ENCODE measurements at regions of chr1 and their contacts with region 1.

Region 1: GRCh38 chr1:39189592-39190041 is 14.9 kb upstream of the MACF1 start:
- DNase-seq: no peak
- ATAC-seq: no peak
- H3K4me3 ChIP-seq: no peak overlapping the region
- H3K4me3 Mint-ChIP-seq: peak overlapping the region in 1 of 10 donors; percentile 37
- H3K27ac ChIP-seq: no peak overlapping the region
- H3K27ac Mint-ChIP-seq: peak overlapping the region in 7 of 9 donors; percentile 30 to 97 (median 73)
- H3K4me1 ChIP-seq: peaks cover 22 to 28% of the 10 kb centered on the region in 2 donors
- H3K4me1 Mint-ChIP-seq: peaks cover 30 to 83% (median 55%) of the 10 kb centered on the region in 7 donors
- H3K27me3 ChIP-seq: no peaks in the 10 kb centered on the region
- H3K27me3 Mint-ChIP-seq: no peaks in the 10 kb centered on the region

Region 2: DNA sequence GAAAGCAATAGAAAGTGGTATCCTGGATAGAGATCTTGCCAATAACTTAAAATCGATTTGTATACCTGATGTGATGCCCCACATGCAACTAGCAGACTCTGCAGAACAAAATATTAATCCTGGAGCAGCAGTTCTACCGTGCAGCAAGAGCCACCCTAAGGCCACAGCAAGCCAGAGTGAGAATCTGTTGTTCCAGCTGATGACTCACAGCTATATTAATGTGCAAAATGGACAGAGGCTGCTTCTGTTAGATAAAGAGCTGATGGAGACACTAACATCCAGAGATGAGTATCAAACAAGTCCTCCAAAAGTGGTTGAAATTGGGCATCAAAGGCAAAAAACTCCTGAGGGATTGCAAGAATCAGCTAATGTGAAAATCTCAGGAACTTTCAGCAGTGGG is 142.7 kb after region 1 on chr1:
- CTCF ChIA-PET with region 1: no interaction called
- POLR2A ChIA-PET with region 1: no interaction called
- intact Hi-C with region 1: loop called in 1 of 2 experiments (anchors 5 kb)
- DNase-seq: no peak
- ATAC-seq: no peak
- H3K4me3 ChIP-seq: no peak overlapping the region
- H3K4me3 Mint-ChIP-seq: no peak overlapping the region
- H3K27ac ChIP-seq: no peak overlapping the region
- H3K27ac Mint-ChIP-seq: peak overlapping the region in 5 of 9 donors; percentile 32 to 72 (median 38)
- H3K4me1 ChIP-seq: peaks cover 0 to 16% of the 10 kb centered on the region in 2 donors
- H3K4me1 Mint-ChIP-seq: peaks cover 6 to 45% (median 14%) of the 10 kb centered on the region in 7 donors
- H3K27me3 ChIP-seq: no peaks in the 10 kb centered on the region
- H3K27me3 Mint-ChIP-seq: no peaks in the 10 kb centered on the region

Measured in naive thymus-derived CD4-positive, alpha-beta T cell (primary cell).